WTC11 (cell line): ENCODE measurements at regions of chr6 and their contacts with region 1.

Region 1: GRCh38 chr6:73129653-73130443 is 95.4 kb downstream of the KHDC1L start:
- DNase-seq: peak; percentile 94
- ATAC-seq: peak; percentile 83
- H3K4me3 Mint-ChIP-seq: no peak overlapping the region
- H3K27ac Mint-ChIP-seq: no peak overlapping the region
- H3K4me1 Mint-ChIP-seq: peaks cover 10% of the 10 kb centered on the region
- H3K27me3 Mint-ChIP-seq: no peaks in the 10 kb centered on the region
- CTCF ChIP-seq: peak; percentile 93

Region 2: DNA sequence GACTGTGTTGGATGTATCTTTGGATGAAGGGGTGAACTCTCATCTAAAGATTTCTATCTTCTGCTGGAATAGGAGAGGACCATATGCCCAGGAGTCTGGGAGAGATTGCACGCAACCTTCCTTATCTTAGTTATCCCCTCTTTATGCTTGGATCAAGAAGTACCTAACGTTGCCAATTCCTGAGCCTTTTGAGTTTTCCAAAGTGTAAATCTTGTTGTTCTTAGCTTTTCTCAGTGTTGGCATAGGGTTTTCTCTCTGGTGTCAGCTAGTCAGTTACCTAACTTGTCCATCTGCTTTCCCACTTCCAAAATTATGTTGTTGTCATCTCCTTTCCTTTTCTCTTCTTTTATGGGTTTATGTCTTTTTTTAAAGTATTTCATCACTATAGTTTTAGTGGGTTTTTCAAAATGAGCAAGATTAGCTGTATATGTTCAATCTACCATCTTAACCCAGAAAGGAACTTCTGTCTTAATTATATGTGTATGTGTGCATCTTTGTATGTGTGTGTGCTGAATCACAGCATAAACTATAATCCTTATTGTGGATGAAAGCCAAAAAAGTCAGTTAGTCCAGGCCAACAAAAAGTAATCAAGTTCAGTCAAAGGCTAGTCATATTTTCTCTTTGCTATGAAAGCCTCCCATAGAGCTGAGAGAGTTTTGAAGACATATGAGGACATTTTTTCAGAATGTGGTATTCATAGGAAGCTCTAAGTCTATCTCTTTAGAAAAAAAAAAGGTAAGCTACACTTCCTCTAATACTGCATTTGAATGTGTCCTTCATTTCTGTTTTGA is 23.3 kb after region 1 on chr6:
- CTCF ChIA-PET with region 1: interaction called, 10 read pairs
- POLR2A ChIA-PET with region 1: no interaction called
- DNase-seq: no peak
- ATAC-seq: no peak
- H3K4me3 Mint-ChIP-seq: no peak overlapping the region
- H3K27ac Mint-ChIP-seq: no peak overlapping the region
- H3K4me1 Mint-ChIP-seq: no peaks in the 10 kb centered on the region
- H3K27me3 Mint-ChIP-seq: no peaks in the 10 kb centered on the region
- CTCF ChIP-seq: no peak

Region 3: GRCh38 chr6:73451223-73452107 is 321.6 kb after region 1 on chr6:
- CTCF ChIA-PET with region 1: no interaction called
- POLR2A ChIA-PET with region 1: no interaction called
- DNase-seq: peak; percentile 59
- ATAC-seq: peak; percentile 65
- H3K4me3 Mint-ChIP-seq: peak overlapping the region; percentile 67
- H3K27ac Mint-ChIP-seq: no peak overlapping the region
- H3K4me1 Mint-ChIP-seq: peaks cover 6% of the 10 kb centered on the region
- H3K27me3 Mint-ChIP-seq: peaks cover 35% of the 10 kb centered on the region
- CTCF ChIP-seq: no peak